Activated CD4-positive, alpha-beta T cell treated with anti-CD3 and anti-CD28 coated beads for 36 hours (primary cell): ENCODE measurements at regions of chr3 and their contacts with region 1.

Region 1: DNA sequence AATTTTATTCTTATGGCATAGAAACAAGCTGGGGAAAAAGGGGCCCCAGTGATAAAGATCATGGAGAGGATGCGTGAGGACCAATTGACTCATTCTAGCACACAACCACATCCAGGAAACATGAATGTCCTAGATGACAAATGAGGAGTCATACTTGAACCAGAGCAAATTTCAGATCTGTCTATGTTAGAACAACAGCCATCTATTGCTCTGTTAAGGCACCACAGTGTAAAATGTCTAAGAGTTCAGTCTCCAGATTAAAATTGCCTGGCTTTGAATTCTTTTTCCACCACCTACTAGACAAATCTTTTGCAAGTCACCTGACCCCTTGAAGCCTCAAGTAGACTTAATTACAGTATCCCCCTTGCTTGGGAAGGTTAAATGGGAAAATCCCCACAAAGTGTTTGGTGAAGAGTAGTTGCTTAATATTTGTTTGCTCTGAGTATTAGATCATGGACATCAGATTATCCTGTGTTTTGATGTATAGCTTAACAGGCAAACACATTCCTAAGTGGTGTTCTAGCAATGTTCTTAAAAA is 258.7 kb upstream of the TGFBR2 start:
- DNase-seq: peak; percentile 67
- ATAC-seq: peak; percentile 97
- H3K4me3 Mint-ChIP-seq: no peak overlapping the region
- H3K27ac Mint-ChIP-seq: peak overlapping the region; percentile 82
- H3K4me1 Mint-ChIP-seq: peaks cover 85% of the 10 kb centered on the region
- H3K27me3 Mint-ChIP-seq: peaks cover 8% of the 10 kb centered on the region

Region 2: GRCh38 chr3:30332196-30333021 is 15.3 kb before region 1 on chr3:
- CTCF ChIA-PET with region 1: interaction called, 4 read pairs
- POLR2A ChIA-PET with region 1: no interaction called
- intact Hi-C with region 1: loop called in 1 of 2 experiments (anchors 2 kb)
- DNase-seq: no peak
- ATAC-seq: peak; percentile 69
- H3K4me3 Mint-ChIP-seq: peak overlapping the region; percentile 3
- H3K27ac Mint-ChIP-seq: peak overlapping the region; percentile 79
- H3K4me1 Mint-ChIP-seq: peaks cover 29% of the 10 kb centered on the region
- H3K27me3 Mint-ChIP-seq: no peaks in the 10 kb centered on the region

Region 3: DNA sequence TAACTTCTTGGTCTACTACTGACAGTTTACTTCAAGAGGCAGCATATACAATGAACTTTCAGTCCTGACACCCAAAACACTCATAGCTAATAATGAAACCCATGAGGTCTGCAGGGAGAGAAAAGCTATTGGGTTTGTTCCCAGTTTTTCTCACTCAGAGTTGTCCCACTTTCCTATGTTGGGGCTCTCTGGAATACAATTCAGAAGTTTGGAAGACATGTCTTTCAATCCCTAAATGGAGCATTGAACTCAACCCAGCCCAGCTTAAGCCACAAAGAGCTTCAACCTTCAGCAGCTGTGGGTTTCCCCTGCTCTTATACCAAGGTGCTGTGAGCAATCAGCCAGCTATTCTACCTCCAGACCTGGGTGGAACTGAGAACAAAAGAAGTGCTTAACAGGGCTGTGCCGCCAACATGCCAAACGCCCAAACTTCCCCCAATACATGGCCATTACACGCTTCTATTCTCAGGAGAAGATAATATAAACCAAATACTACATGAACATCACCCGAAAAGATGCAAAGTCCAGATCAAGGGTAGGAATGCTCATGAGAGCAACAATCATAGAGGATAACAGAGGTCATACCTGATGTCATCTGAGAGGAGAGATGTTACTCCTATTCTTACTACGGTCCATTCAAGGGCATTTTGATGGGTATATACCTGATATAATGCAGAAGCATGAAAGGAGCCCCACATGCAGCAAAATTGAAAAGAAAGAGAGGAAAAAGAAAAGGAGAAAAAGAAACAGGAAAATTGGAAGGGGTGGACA is 127.5 kb after region 1 on chr3:
- CTCF ChIA-PET with region 1: interaction called, 3 read pairs
- POLR2A ChIA-PET with region 1: no interaction called
- intact Hi-C with region 1: loop called (anchors 2 to 5 kb)
- DNase-seq: peak; percentile 60
- ATAC-seq: peak; percentile 83
- H3K4me3 Mint-ChIP-seq: no peak overlapping the region
- H3K27ac Mint-ChIP-seq: peak overlapping the region; percentile 22
- H3K4me1 Mint-ChIP-seq: peaks cover 52% of the 10 kb centered on the region
- H3K27me3 Mint-ChIP-seq: no peaks in the 10 kb centered on the region

Region 4: GRCh38 chr3:30623351-30623750 is 275.6 kb after region 1 on chr3:
- CTCF ChIA-PET with region 1: no interaction called
- POLR2A ChIA-PET with region 1: no interaction called
- intact Hi-C with region 1: loop called (anchors 1 to 5 kb)
- DNase-seq: no peak
- ATAC-seq: peak; percentile 20
- H3K4me3 Mint-ChIP-seq: peak overlapping the region; percentile 17
- H3K27ac Mint-ChIP-seq: peak overlapping the region; percentile 83
- H3K4me1 Mint-ChIP-seq: peaks cover 96% of the 10 kb centered on the region
- H3K27me3 Mint-ChIP-seq: no peaks in the 10 kb centered on the region